Calu3 (cell line): ENCODE measurements at regions of chr16 and their contacts with region 1.

Region 1: GRCh38 chr16:74034862-74035261 is 261.8 kb upstream of the PSMD7 start:
- DNase-seq: peak; percentile 36
- H3K4me3 Mint-ChIP-seq: no peak overlapping the region
- H3K27ac Mint-ChIP-seq: no peak overlapping the region
- H3K4me1 Mint-ChIP-seq: no peaks in the 10 kb centered on the region
- H3K27me3 Mint-ChIP-seq: peaks cover 20% of the 10 kb centered on the region
- CTCF ChIP-seq: no peak

Region 2: DNA sequence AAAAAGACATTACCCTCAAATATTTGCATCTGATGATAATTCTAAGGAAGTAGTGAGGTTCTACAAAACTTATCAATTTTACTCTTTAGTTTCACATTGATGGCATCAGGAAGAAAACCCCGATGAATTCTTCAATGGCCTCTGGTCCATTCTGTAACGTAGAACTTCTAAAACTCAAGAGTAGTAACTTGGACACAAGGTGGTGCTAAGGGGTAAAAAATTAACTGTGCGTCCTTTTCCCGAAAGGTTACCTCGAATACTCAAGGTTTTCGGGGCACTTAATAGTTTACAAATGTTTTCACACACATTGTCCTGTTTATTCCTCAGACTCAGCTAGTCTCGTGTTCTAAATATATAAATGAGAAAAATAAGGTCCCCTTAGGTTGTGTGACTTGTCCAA is 469.6 kb before region 1 on chr16:
- CTCF ChIA-PET with region 1: no interaction called
- intact Hi-C with region 1: loop called (anchors 2 kb)
- DNase-seq: peak; percentile 19
- H3K4me3 Mint-ChIP-seq: no peak overlapping the region
- H3K27ac Mint-ChIP-seq: no peak overlapping the region
- H3K4me1 Mint-ChIP-seq: no peaks in the 10 kb centered on the region
- H3K27me3 Mint-ChIP-seq: peaks cover 45% of the 10 kb centered on the region
- CTCF ChIP-seq: no peak

Region 3: GRCh38 chr16:73713778-73714495 is 320.9 kb before region 1 on chr16:
- CTCF ChIA-PET with region 1: no interaction called
- intact Hi-C with region 1: loop called (anchors 5 kb)
- DNase-seq: peak; percentile 65
- H3K4me3 Mint-ChIP-seq: no peak overlapping the region
- H3K27ac Mint-ChIP-seq: no peak overlapping the region
- H3K4me1 Mint-ChIP-seq: peaks cover 7% of the 10 kb centered on the region
- H3K27me3 Mint-ChIP-seq: peaks cover 38% of the 10 kb centered on the region
- CTCF ChIP-seq: peak; percentile 67

Region 4: DNA sequence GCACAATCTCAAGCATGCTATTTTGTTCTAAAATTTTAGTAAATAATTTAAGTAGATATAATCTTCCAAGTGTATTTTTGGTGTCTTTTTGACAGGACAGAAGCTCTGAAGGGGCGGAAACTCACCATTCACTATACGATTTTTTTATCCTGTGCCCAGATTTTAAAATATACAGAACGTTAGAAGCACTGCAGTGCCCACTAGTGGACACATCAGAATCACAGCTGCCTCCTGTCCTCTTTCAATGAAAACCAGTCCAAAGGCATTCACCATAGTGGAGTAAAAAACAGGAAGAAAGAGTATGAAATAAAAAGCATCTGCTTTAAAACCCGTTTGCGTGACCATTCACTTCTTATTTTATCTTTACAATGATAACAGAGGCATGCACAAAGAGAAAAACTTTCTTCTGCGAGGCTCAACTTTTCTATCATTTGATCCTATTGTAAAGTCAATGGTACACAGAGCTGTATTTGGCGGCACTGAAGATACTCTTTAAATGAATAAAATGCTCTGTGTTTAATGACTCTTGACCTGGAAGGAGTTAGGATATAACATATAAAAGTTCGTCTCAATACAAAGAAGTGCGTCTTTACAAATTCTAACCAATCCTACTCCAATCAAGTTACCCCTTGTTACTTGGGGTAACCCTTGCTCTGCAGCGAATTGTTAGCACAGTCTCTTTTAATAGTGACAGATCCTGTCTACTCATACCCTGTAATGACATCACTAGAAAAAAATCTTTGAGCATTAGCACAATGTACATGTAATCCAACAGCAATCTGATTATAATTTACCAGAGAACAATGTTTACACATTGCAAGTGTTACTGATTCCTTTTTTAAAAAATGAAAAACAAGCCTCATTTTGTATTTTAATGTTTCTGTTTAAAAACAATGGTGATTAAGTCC is 78.0 kb before region 1 on chr16:
- CTCF ChIA-PET with region 1: interaction called, 7 read pairs
- intact Hi-C with region 1: loop called (anchors 2 kb)
- DNase-seq: peak; percentile 73
- H3K4me3 Mint-ChIP-seq: no peak overlapping the region
- H3K27ac Mint-ChIP-seq: no peak overlapping the region
- H3K4me1 Mint-ChIP-seq: no peaks in the 10 kb centered on the region
- H3K27me3 Mint-ChIP-seq: peaks cover 71% of the 10 kb centered on the region
- CTCF ChIP-seq: peak; percentile 69

Region 5: DNA sequence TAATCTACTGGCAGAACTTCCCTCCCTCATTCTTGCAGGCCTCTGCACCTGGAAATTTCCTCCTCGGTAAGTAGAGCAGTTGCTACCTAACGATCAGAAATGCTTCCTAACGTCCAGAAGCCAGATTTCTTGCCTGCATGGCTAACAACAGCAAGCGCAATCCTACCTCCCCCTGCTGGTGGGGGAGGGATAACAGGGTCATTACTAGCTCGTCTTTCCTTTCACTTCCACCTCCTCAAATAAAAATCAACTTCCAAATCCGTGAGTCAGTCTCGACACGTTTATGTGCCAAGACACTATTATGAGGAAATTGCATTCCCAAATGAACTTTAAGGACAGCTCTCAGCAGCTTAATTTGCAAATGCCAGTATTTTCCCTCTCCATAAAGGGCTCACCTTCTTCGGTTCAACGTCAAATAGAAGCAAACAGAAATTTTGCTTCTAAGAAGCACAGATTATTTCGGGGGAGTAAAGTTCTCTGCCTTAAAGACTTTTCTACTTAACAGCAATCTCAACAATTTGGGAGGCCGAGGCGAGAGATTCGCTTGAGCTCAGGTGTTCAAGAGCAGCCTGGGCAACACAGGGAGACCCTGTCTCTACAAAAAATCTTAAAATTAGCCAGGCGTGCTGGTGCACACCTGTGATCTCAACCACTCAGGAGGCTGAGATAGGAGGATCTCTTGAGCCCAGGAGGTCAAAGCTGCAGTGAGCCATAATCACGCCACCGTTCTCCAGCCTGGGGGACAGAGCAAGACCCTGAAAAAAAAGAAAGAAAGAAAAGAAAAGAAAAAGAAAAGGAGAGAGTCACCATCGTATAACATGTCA is 73.1 kb after region 1 on chr16:
- CTCF ChIA-PET with region 1: no interaction called
- intact Hi-C with region 1: no loop called
- DNase-seq: peak; percentile 86
- H3K4me3 Mint-ChIP-seq: peak overlapping the region; percentile 50
- H3K27ac Mint-ChIP-seq: no peak overlapping the region
- H3K4me1 Mint-ChIP-seq: peaks cover 13% of the 10 kb centered on the region
- H3K27me3 Mint-ChIP-seq: peaks cover 11% of the 10 kb centered on the region
- CTCF ChIP-seq: peak; percentile 84

Region 6: GRCh38 chr16:74275002-74275636 is 240.3 kb after region 1 on chr16:
- CTCF ChIA-PET with region 1: interaction called, 6 read pairs
- intact Hi-C with region 1: loop called (anchors 1 kb)
- DNase-seq: no peak
- H3K4me3 Mint-ChIP-seq: no peak overlapping the region
- H3K27ac Mint-ChIP-seq: no peak overlapping the region
- H3K4me1 Mint-ChIP-seq: no peaks in the 10 kb centered on the region
- H3K27me3 Mint-ChIP-seq: peaks cover 68% of the 10 kb centered on the region
- CTCF ChIP-seq: peak; percentile 32